ENCODE measurements at regions of chr2 and their contacts with region 1.

Region 1: GRCh38 chr2:28915939-28916338 is 21.5 kb downstream of the WDR43 start:
- DNase-seq: no peak
- ATAC-seq: no peak
- H3K4me3 ChIP-seq: no peak overlapping the region
- H3K27ac ChIP-seq: no peak overlapping the region
- H3K4me1 ChIP-seq: no peaks in the 10 kb centered on the region
- H3K27me3 ChIP-seq: no peaks in the 10 kb centered on the region
- CTCF ChIP-seq: no peak

Region 2: GRCh38 chr2:28828382-28828781 is 87.6 kb before region 1 on chr2:
- CTCF ChIA-PET with region 1: no interaction called
- POLR2A ChIA-PET with region 1: interaction called, 10 read pairs
- in situ Hi-C with region 1: no loop called
- intact Hi-C with region 1: no loop called
- DNase-seq: no peak
- ATAC-seq: no peak
- H3K4me3 ChIP-seq: no peak overlapping the region
- H3K27ac ChIP-seq: no peak overlapping the region
- H3K4me1 ChIP-seq: no peaks in the 10 kb centered on the region
- H3K27me3 ChIP-seq: no peaks in the 10 kb centered on the region
- CTCF ChIP-seq: no peak

Region 3: GRCh38 chr2:29963972-29964570 is 1048.1 kb after region 1 on chr2:
- CTCF ChIA-PET with region 1: no interaction called
- POLR2A ChIA-PET with region 1: interaction called, 11 read pairs
- in situ Hi-C with region 1: no loop called
- intact Hi-C with region 1: no loop called
- DNase-seq: no peak
- ATAC-seq: no peak
- H3K4me3 ChIP-seq: no peak overlapping the region
- H3K27ac ChIP-seq: no peak overlapping the region
- H3K4me1 ChIP-seq: no peaks in the 10 kb centered on the region
- H3K27me3 ChIP-seq: peaks cover 17% of the 10 kb centered on the region
- CTCF ChIP-seq: no peak

Measured in Panc1 (cell line).